ENCODE measurements at regions of chr1 and their contacts with region 1.

Region 1: DNA sequence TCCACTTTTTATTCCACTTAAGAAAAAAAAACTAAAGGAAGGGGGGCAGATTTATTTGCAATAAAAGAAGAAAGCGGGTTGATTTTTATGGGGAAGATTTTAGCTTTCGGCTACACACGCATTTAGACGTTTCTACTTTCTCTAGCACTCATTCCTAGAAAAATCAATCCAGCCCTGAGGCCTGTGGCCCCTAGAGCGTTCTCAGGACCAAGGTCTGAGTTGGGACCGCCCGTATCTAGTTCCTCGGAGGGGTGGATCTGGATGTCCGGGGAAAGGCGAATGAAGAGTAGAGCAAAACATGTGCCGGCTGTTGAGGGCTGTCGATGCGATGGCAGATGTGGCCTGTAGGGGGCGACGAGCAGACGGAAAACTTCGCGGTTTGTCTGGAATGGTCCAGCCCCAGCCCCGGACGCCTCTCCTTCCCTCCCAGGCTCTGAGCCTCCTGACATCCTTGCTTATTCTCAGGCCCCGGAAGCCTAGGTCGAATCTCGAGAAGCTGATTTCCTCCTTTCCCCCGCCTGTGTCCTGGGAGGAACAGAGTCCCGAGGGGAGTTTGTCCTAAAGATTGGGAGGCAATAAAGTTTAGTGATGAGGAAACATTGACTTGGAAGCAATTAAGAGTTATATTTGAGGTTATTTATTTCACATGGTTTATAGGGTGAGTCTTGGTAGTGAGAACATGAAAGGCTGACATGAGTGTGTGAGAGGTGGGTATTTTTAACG is 5.2 kb downstream of the FOXD3 start:
- DNase-seq: peak; percentile 60
- ATAC-seq: peak; percentile 98
- H3K4me3 ChIP-seq: peak overlapping the region in 1 of 2 experiments; percentile 9; a peak in 1 of 4 replicates
- H3K27ac ChIP-seq: no peak overlapping the region
- H3K4me1 ChIP-seq: peaks cover 0 to 10% of the 10 kb centered on the region in 2 experiments; a peak in 3 of 4 replicates
- H3K27me3 ChIP-seq: no peaks in the 10 kb centered on the region
- CTCF ChIP-seq: peak; percentile 60 to 86 (median 86)
- POLR2A ChIP-seq: no peak
- RAD21 ChIP-seq: peak; percentile 74

Region 2: DNA sequence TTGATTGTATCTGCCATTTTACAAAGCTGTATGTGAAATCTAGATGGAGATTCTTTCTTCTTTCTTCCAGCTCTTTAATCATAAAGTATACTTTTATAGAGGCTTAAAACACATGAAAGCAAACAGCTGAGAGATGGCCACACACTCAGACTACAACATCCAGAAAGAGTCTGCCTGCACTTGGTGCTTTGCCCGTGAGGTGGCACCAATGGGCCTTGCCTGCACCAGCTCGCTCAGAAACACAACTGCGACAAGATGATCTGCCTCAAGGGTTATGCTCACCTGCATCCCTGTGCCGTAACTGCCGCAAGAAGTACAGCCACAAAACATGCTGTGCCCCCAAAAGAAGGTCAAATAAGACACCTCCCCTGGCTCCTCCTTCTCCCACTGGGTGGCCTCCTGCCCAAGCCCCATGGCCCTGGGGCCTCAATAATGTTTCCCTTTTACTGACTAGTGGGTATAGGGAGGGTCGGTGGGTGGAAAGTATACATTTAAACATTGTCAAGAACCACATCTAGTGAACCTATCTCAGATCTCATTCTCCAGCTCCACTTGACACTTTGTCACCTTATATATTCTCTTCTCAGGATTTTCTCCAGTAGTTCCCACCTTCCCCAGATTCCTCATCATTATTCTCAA is 796.9 kb before region 1 on chr1:
- CTCF ChIA-PET with region 1: no interaction called
- POLR2A ChIA-PET with region 1: no interaction called
- RAD21 ChIA-PET with region 1: no interaction called
- intact Hi-C with region 1: no loop called
- DNase-seq: no peak
- ATAC-seq: no peak
- H3K4me3 ChIP-seq: no peak overlapping the region
- H3K27ac ChIP-seq: no peak overlapping the region
- H3K4me1 ChIP-seq: no peaks in the 10 kb centered on the region
- H3K27me3 ChIP-seq: no peaks in the 10 kb centered on the region
- CTCF ChIP-seq: no peak
- POLR2A ChIP-seq: no peak
- RAD21 ChIP-seq: no peak

Region 3: GRCh38 chr1:63316984-63317816 is 10.4 kb before region 1 on chr1:
- CTCF ChIA-PET with region 1: interaction called, 11 read pairs
- POLR2A ChIA-PET with region 1: no interaction called
- RAD21 ChIA-PET with region 1: no interaction called
- intact Hi-C with region 1: no loop called
- DNase-seq: peak; percentile 78
- ATAC-seq: peak; percentile 93
- H3K4me3 ChIP-seq: peak overlapping the region; percentile 50 to 68
- H3K27ac ChIP-seq: peak overlapping the region; percentile 73
- H3K4me1 ChIP-seq: peaks cover 10 to 14% of the 10 kb centered on the region in 2 experiments
- H3K27me3 ChIP-seq: no peaks in the 10 kb centered on the region
- CTCF ChIP-seq: peak; percentile 59 to 88 (median 66)
- POLR2A ChIP-seq: no peak
- RAD21 ChIP-seq: peak; percentile 67

Region 4: GRCh38 chr1:63442141-63442475 is 114.5 kb after region 1 on chr1:
- CTCF ChIA-PET with region 1: no interaction called
- POLR2A ChIA-PET with region 1: no interaction called
- RAD21 ChIA-PET with region 1: no interaction called
- intact Hi-C with region 1: loop called (anchors 5 kb)
- DNase-seq: no peak
- ATAC-seq: no peak
- H3K4me3 ChIP-seq: no peak overlapping the region
- H3K27ac ChIP-seq: no peak overlapping the region
- H3K4me1 ChIP-seq: no peaks in the 10 kb centered on the region
- H3K27me3 ChIP-seq: no peaks in the 10 kb centered on the region
- CTCF ChIP-seq: no peak
- POLR2A ChIP-seq: no peak
- RAD21 ChIP-seq: no peak

Region 5: DNA sequence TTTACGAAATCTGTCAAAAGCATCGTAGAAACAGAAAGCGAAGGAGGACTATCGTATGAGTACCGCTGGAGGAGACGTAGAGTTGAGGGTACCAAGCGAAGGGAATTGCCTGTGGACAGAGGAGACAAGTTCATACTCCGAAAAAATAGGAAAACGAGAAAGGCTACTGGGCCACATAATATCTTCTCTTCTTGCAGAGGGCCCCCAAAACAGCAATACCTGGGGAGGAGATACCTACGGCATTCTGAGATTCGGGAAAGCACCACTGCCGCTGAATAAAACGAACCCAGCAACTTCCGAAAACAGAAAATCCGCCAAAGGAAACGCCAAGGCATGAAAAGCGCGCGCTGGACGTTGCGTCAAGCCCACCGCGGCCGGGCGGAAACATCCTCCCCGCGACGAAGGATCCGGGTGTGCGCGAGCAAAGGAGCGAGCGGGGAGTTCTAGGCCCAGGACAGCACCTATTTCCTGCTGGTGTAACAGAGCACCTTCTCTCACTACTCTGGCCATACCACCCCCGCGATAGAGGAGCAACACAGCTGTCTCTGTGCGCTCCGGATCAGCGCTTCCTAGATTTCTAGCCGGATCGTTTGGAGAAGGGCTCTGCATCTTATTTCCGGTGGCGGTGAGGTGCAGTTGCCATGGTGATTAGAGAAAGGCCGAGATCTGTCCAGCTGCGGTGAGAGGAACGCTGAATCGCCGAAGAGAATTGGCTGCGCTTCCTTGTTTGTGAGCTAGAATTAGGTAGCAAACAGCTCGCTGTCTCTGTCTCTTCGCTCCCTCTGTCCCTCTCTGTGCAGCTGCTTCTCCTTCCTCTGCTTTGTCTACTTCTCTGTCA is 195.5 kb after region 1 on chr1 and contains the starts of genes EFCAB7 and ITGB3BP:
- CTCF ChIA-PET with region 1: no interaction called
- POLR2A ChIA-PET with region 1: no interaction called
- RAD21 ChIA-PET with region 1: no interaction called
- intact Hi-C with region 1: loop called (anchors 5 kb)
- DNase-seq: peak; percentile 95
- ATAC-seq: peak; percentile 96
- H3K4me3 ChIP-seq: peak within 1 kb of the TSS; percentile 66 to 76
- H3K27ac ChIP-seq: peak within 1 kb of the TSS; percentile 78
- H3K4me1 ChIP-seq: peaks cover 11 to 13% of the 10 kb centered on the region in 2 experiments; a peak in 3 of 4 replicates
- H3K27me3 ChIP-seq: no peaks in the 10 kb centered on the region
- CTCF ChIP-seq: no peak
- POLR2A ChIP-seq: peak; percentile 77
- RAD21 ChIP-seq: no peak
- total RNA-seq, gene EFCAB7: 6.0 TPM
- total RNA-seq, gene ITGB3BP: 50.2 TPM